ENCODE measurements at regions of chr6 and their contacts with region 1.

Region 1: DNA sequence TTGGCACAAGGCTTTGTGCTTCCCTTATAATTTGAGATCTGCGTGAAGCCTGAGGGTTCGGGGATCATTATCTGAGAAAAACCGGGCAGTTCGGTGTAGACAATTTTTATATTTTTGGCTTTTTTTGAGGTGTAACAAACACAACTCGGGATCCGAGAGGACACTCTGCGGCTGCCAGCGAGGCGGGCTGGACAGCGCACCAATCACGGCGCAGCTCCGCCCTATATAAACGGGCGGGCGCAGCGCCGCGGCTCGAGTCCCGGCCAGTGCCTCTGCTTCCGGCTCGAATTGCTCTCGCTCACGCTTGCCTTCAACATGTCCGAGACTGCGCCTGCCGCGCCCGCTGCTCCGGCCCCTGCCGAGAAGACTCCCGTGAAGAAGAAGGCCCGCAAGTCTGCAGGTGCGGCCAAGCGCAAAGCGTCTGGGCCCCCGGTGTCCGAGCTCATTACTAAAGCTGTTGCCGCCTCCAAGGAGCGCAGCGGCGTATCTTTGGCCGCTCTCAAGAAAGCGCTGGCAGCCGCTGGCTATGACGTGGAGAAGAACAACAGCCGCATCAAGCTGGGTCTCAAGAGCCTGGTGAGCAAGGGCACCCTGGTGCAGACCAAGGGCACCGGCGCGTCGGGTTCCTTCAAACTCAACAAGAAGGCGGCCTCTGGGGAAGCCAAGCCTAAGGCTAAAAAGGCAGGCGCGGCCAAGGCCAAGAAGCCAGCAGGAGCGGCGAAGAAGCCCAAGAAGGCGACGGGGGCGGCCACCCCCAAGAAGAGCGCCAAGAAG is 69.0 kb downstream of the HFE start:
- DNase-seq: peak; percentile 91
- ATAC-seq: peak; percentile 55
- H3K4me3 Mint-ChIP-seq: peak overlapping the region; percentile 94
- H3K27ac Mint-ChIP-seq: peak overlapping the region; percentile 99
- H3K4me1 Mint-ChIP-seq: peaks cover 37% of the 10 kb centered on the region
- H3K27me3 Mint-ChIP-seq: peaks cover 8% of the 10 kb centered on the region

Region 2: GRCh38 chr6:26054857-26055669 is 101.2 kb before region 1 on chr6:
- CTCF ChIA-PET with region 1: no interaction called
- POLR2A ChIA-PET with region 1: interaction called, 318 read pairs
- DNase-seq: peak; percentile 95
- ATAC-seq: peak; percentile 72
- H3K4me3 Mint-ChIP-seq: peak overlapping the region; percentile 87
- H3K27ac Mint-ChIP-seq: peak overlapping the region; percentile 100
- H3K4me1 Mint-ChIP-seq: peaks cover 36% of the 10 kb centered on the region
- H3K27me3 Mint-ChIP-seq: no peaks in the 10 kb centered on the region

Region 3: GRCh38 chr6:26122793-26123674 is 33.2 kb before region 1 on chr6:
- CTCF ChIA-PET with region 1: interaction called, 13 read pairs
- POLR2A ChIA-PET with region 1: interaction called, 3,176 read pairs
- DNase-seq: peak; percentile 98
- ATAC-seq: peak; percentile 50
- H3K4me3 Mint-ChIP-seq: peak overlapping the region; percentile 95
- H3K27ac Mint-ChIP-seq: peak overlapping the region; percentile 100
- H3K4me1 Mint-ChIP-seq: peaks cover 44% of the 10 kb centered on the region
- H3K27me3 Mint-ChIP-seq: peaks cover 1% of the 10 kb centered on the region

Region 4: GRCh38 chr6:26204332-26205165 is 48.3 kb after region 1 on chr6:
- CTCF ChIA-PET with region 1: interaction called, 3 read pairs
- POLR2A ChIA-PET with region 1: interaction called, 1,978 read pairs
- DNase-seq: peak; percentile 95
- ATAC-seq: peak; percentile 66
- H3K4me3 Mint-ChIP-seq: no peak overlapping the region
- H3K27ac Mint-ChIP-seq: no peak overlapping the region
- H3K4me1 Mint-ChIP-seq: peaks cover 41% of the 10 kb centered on the region
- H3K27me3 Mint-ChIP-seq: no peaks in the 10 kb centered on the region

Region 5: GRCh38 chr6:26285143-26286134 is 129.2 kb after region 1 on chr6:
- CTCF ChIA-PET with region 1: no interaction called
- POLR2A ChIA-PET with region 1: interaction called, 37 read pairs
- DNase-seq: peak; percentile 99
- ATAC-seq: peak; percentile 79
- H3K4me3 Mint-ChIP-seq: peak overlapping the region; percentile 93
- H3K27ac Mint-ChIP-seq: peak overlapping the region; percentile 95
- H3K4me1 Mint-ChIP-seq: peaks cover 42% of the 10 kb centered on the region
- H3K27me3 Mint-ChIP-seq: peaks cover 2% of the 10 kb centered on the region

Region 6: GRCh38 chr6:27825025-27825793 is 1668.9 kb after region 1 on chr6:
- CTCF ChIA-PET with region 1: no interaction called
- POLR2A ChIA-PET with region 1: interaction called, 27 read pairs
- DNase-seq: no peak
- ATAC-seq: peak; percentile 3
- H3K4me3 Mint-ChIP-seq: peak overlapping the region; percentile 93
- H3K27ac Mint-ChIP-seq: peak overlapping the region; percentile 99
- H3K4me1 Mint-ChIP-seq: peaks cover 45% of the 10 kb centered on the region
- H3K27me3 Mint-ChIP-seq: no peaks in the 10 kb centered on the region

Measured in activated CD8-positive, alpha-beta T cell treated with anti-CD3 and anti-CD28 coated beads, Interleukin-2, amount 10 ng/mL, durations not matched to agents 7 days and 5 days (primary cell).